ENCODE measurements at regions of chr17 and their contacts with region 1.

Region 1: DNA sequence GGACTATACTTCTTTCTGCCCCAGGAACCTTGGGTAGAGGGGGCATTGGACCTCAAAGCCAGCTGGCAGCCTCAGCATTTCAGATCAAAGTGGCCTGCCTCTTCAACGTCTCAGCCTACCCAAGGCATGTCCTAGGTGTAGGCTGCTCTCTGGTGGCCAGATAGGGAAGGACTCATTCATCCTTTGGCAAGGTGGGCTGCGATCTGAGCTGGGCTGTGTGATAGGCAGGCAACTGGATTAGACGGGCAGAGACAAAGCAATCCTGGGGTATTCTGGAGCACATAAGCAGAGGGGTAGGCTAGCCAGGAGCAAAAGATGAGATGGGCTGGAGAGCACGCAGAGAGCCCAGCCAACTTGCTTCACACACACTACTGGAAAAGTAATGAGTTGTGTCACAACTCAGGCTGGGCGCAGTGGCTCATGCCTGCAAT is 8.8 kb upstream of the NAGLU start:
- DNase-seq: peak in 8 of 9 donors; percentile 46 to 69 (median 62)
- ATAC-seq: peak; percentile 84
- H3K4me3 ChIP-seq: no peak overlapping the region
- H3K4me3 Mint-ChIP-seq: peak overlapping the region in 7 of 10 donors; percentile 6 to 73 (median 25)
- H3K27ac ChIP-seq: no peak overlapping the region
- H3K27ac Mint-ChIP-seq: peak overlapping the region in 8 of 9 donors; percentile 5 to 91 (median 68)
- H3K4me1 ChIP-seq: peaks cover 33 to 38% of the 10 kb centered on the region in 2 donors
- H3K4me1 Mint-ChIP-seq: peaks cover 23 to 44% (median 32%) of the 10 kb centered on the region in 7 donors
- H3K27me3 ChIP-seq: no peaks in the 10 kb centered on the region
- H3K27me3 Mint-ChIP-seq: peaks cover 0 to 4% (median 0%) of the 10 kb centered on the region in 5 donors

Region 2: GRCh38 chr17:42428141-42428944 is 98.9 kb before region 1 on chr17:
- CTCF ChIA-PET with region 1: interaction called, 7 read pairs
- POLR2A ChIA-PET with region 1: no interaction called
- intact Hi-C with region 1: loop called (anchors 1 kb)
- DNase-seq: peak in 7 of 9 donors; percentile 30 to 58 (median 49)
- ATAC-seq: peak; percentile 79
- H3K4me3 ChIP-seq: no peak overlapping the region
- H3K4me3 Mint-ChIP-seq: no peak overlapping the region
- H3K27ac ChIP-seq: no peak overlapping the region
- H3K27ac Mint-ChIP-seq: no peak overlapping the region
- H3K4me1 ChIP-seq: peaks cover 0 to 3% of the 10 kb centered on the region in 2 donors
- H3K4me1 Mint-ChIP-seq: peaks cover 0 to 6% (median 3%) of the 10 kb centered on the region in 7 donors
- H3K27me3 ChIP-seq: peaks cover 2 to 5% of the 10 kb centered on the region in 2 donors
- H3K27me3 Mint-ChIP-seq: peaks cover 0 to 59% (median 5%) of the 10 kb centered on the region in 5 donors

Measured in naive thymus-derived CD4-positive, alpha-beta T cell (primary cell).